Caco-2 (cell line): ENCODE measurements at regions of chr5 and their contacts with region 1.

Region 1: GRCh38 chr5:69276422-69277174 is 41.9 kb downstream of the CDK7 start:
- DNase-seq: peak in 1 of 2 experiments; percentile 51
- H3K4me3 ChIP-seq: no peak overlapping the region
- H3K4me3 Mint-ChIP-seq: peak overlapping the region; percentile 61
- H3K27ac Mint-ChIP-seq: peak overlapping the region; percentile 90
- H3K4me1 ChIP-seq: peaks cover 26% of the 10 kb centered on the region
- H3K4me1 Mint-ChIP-seq: peaks cover 5% of the 10 kb centered on the region
- H3K27me3 ChIP-seq: no peaks in the 10 kb centered on the region
- H3K27me3 Mint-ChIP-seq: no peaks in the 10 kb centered on the region
- CTCF ChIP-seq: no peak

Region 2: DNA sequence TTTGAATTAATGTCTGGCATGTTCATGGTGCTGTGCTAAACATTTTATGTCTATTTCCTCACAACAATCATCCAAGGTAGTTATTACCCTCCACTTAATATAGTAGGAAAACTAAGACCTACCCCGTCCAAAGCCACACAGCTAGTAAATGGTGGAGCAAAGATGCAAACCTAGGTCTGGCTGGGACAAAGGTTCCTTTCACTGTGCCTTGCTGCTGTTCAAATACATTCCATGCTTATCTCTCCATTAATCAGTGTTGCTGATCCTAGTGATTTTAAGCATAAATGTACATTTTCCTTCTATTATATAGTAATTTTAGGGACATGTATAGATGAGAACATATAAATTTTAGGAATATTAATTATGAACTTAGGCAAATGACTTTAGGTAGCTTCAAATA is 17.3 kb after region 1 on chr5:
- CTCF ChIA-PET with region 1: no interaction called
- POLR2A ChIA-PET with region 1: no interaction called
- intact Hi-C with region 1: loop called (anchors 2 kb)
- DNase-seq: peak; percentile 57 to 69
- H3K4me3 ChIP-seq: no peak overlapping the region
- H3K4me3 Mint-ChIP-seq: peak overlapping the region; percentile 27
- H3K27ac Mint-ChIP-seq: no peak overlapping the region
- H3K4me1 ChIP-seq: peaks cover 48% of the 10 kb centered on the region
- H3K4me1 Mint-ChIP-seq: peaks cover 30% of the 10 kb centered on the region
- H3K27me3 ChIP-seq: no peaks in the 10 kb centered on the region
- H3K27me3 Mint-ChIP-seq: no peaks in the 10 kb centered on the region
- CTCF ChIP-seq: no peak